ENCODE measurements at regions of chr22 and their contacts with region 1.

Region 1: GRCh38 chr22:42553475-42554361 is at the start of gene SERHL2:
- DNase-seq: peak; percentile 47 to 92
- H3K4me3 ChIP-seq: peak within 1 kb of the TSS; percentile 70 to 81
- H3K27ac ChIP-seq: peak within 1 kb of the TSS; percentile 12 to 26
- H3K4me1 ChIP-seq: peaks cover 5 to 9% of the 10 kb centered on the region in 2 donors
- H3K27me3 ChIP-seq: no peaks in the 10 kb centered on the region
- CTCF ChIP-seq: peak in 1 of 3 experiments; percentile 4
- total RNA-seq, gene SERHL2: 3.1 TPM

Region 2: GRCh38 chr22:42444077-42444904 is 109.4 kb before region 1 on chr22:
- intact Hi-C with region 1: loop called (anchors 5 kb)
- DNase-seq: peak; percentile 62 to 93
- H3K4me3 ChIP-seq: peak overlapping the region; percentile 38 to 64
- H3K27ac ChIP-seq: peak overlapping the region; percentile 81 to 82
- H3K4me1 ChIP-seq: peaks cover 0 to 17% of the 10 kb centered on the region in 2 donors
- H3K27me3 ChIP-seq: no peaks in the 10 kb centered on the region
- CTCF ChIP-seq: peak; percentile 48 to 61 (median 57)

Region 3: GRCh38 chr22:42520663-42521546 is 32.8 kb before region 1 on chr22:
- intact Hi-C with region 1: loop called (anchors 2 kb)
- DNase-seq: no peak
- H3K4me3 ChIP-seq: no peak overlapping the region
- H3K27ac ChIP-seq: no peak overlapping the region
- H3K4me1 ChIP-seq: peaks cover 0 to 3% of the 10 kb centered on the region in 2 donors
- H3K27me3 ChIP-seq: no peaks in the 10 kb centered on the region
- CTCF ChIP-seq: no peak

Region 4: DNA sequence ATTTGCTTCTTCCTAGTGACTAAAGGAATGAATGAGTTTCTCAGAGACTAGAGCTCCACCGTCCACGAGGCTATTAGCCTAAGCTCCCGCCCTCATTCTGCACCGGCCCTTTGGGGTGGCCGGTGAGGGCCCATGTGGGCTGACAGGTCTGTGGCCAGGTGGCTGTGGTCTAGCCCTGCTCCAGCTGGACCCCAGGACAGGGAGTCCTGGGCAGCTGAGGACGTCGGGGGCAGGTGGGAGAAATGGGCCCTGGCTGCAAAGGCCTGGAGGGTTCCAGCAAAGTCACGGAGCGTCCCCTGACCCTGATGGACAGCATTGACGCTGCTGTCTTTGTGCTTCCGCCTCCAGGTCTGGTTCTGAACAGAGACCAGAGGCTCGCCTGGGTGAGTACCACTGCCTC is 12.2 kb after region 1 on chr22:
- intact Hi-C with region 1: no loop called
- DNase-seq: no peak
- H3K4me3 ChIP-seq: no peak overlapping the region
- H3K27ac ChIP-seq: no peak overlapping the region
- H3K4me1 ChIP-seq: no peaks in the 10 kb centered on the region
- H3K27me3 ChIP-seq: no peaks in the 10 kb centered on the region
- CTCF ChIP-seq: no peak